WTC11 (cell line): ENCODE measurements at regions of chr10 and their contacts with region 1.

Region 1: GRCh38 chr10:84026544-84027257 is 112.6 kb upstream of the GHITM start:
- DNase-seq: peak; percentile 50
- ATAC-seq: peak; percentile 76
- H3K4me3 Mint-ChIP-seq: no peak overlapping the region
- H3K27ac Mint-ChIP-seq: no peak overlapping the region
- H3K4me1 Mint-ChIP-seq: no peaks in the 10 kb centered on the region
- H3K27me3 Mint-ChIP-seq: no peaks in the 10 kb centered on the region
- CTCF ChIP-seq: peak; percentile 74

Region 2: DNA sequence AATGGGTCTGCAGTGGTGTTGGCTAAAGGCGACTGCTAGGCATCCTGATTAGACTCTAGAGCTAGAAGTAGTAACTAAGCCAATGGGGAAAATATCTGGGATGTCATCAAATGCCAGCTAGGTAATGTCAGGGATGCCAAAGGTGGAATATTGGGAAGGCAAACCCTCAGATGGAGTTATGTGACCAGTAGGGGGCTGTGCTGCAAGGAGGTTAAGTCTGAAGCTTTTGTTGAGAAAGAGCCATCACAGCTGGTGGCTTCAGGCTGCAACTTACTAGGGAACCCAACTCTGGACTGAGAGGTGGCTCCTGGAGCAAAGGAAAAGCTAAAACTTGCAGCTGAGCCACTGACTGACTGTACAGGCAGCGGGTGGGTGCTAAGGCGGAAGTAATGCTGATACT is 464.3 kb before region 1 on chr10:
- CTCF ChIA-PET with region 1: interaction called, 10 read pairs
- POLR2A ChIA-PET with region 1: no interaction called
- DNase-seq: no peak
- ATAC-seq: peak; percentile 83
- H3K4me3 Mint-ChIP-seq: no peak overlapping the region
- H3K27ac Mint-ChIP-seq: no peak overlapping the region; the same call in 1 of the 2 replicates
- H3K4me1 Mint-ChIP-seq: peaks cover 6% of the 10 kb centered on the region; the same call in 1 of the 2 replicates
- H3K27me3 Mint-ChIP-seq: no peaks in the 10 kb centered on the region
- CTCF ChIP-seq: no peak

Region 3: GRCh38 chr10:84015877-84016595 is 10.7 kb before region 1 on chr10:
- CTCF ChIA-PET with region 1: interaction called, 22 read pairs
- POLR2A ChIA-PET with region 1: no interaction called
- DNase-seq: no peak
- ATAC-seq: no peak
- H3K4me3 Mint-ChIP-seq: no peak overlapping the region
- H3K27ac Mint-ChIP-seq: no peak overlapping the region
- H3K4me1 Mint-ChIP-seq: peaks cover 13% of the 10 kb centered on the region
- H3K27me3 Mint-ChIP-seq: no peaks in the 10 kb centered on the region; the same call in 1 of the 2 replicates
- CTCF ChIP-seq: no peak

Region 4: GRCh38 chr10:84114088-84114667 is 87.5 kb after region 1 on chr10:
- CTCF ChIA-PET with region 1: interaction called, 12 read pairs
- POLR2A ChIA-PET with region 1: no interaction called
- DNase-seq: peak; percentile 11
- ATAC-seq: no peak
- H3K4me3 Mint-ChIP-seq: no peak overlapping the region
- H3K27ac Mint-ChIP-seq: 0 out of 2 replicates have a peak overlapping the region, but pooled peaks have one; percentile 15
- H3K4me1 Mint-ChIP-seq: no peaks in the 10 kb centered on the region
- H3K27me3 Mint-ChIP-seq: no peaks in the 10 kb centered on the region; the same call in 1 of the 2 replicates
- CTCF ChIP-seq: 0 out of 2 replicates have a peak, but pooled peaks have one; percentile 17